CD4-positive, alpha-beta memory T cell (primary cell): ENCODE measurements at regions of chr3 and their contacts with region 1.

Region 1: DNA sequence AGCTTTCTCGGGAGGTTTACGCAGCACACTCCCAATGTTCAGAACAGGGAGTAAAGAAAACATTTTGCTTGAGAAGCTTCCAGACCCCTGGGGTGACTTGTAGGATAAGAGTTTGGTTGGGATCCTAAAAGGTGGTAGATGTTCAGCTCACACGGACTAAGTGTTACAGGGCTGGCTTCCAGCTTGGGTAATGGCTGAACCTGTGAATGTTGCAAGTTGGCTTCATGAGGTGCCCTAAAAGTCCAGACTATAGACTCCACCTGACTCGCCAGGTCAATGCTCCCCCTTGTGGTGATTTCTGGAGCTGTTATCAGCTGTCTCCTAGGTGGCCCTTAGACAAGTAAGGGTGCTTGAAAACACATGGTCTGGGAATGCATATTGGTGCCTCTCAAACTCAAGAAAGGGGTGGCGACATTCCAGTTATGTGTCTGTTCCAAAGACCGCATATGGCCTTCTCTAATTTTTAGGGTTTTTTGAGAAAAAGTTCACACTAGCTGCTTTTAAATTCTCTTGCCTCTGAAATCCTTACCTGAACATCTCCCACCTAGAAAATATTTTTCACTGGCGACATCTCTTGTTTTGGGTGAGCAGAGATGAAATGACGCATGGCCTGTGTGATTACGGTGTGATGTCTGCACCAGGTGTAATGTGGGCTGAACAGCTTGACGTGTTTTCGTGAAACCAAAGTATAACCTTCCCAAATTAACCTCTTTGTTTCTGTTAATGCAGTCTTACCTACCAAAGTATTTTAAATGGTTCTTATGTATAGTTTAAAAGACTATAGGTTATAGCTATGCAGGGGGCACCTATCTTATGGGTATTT is 175.7 kb upstream of the KBTBD8 start:
- DNase-seq: peak; percentile 60 to 73 (median 64)
- H3K4me3 ChIP-seq: no peak overlapping the region
- H3K4me3 Mint-ChIP-seq: no peak overlapping the region
- H3K27ac ChIP-seq: no peak overlapping the region
- H3K27ac Mint-ChIP-seq: no peak overlapping the region
- H3K4me1 ChIP-seq: no peaks in the 10 kb centered on the region
- H3K4me1 Mint-ChIP-seq: peaks cover 0 to 2% (median 0%) of the 10 kb centered on the region in 4 donors
- H3K27me3 ChIP-seq: no peaks in the 10 kb centered on the region
- H3K27me3 Mint-ChIP-seq: peaks cover 0 to 4% of the 10 kb centered on the region in 2 donors

Region 2: GRCh38 chr3:66248641-66249040 is 573.8 kb before region 1 on chr3:
- CTCF ChIA-PET with region 1: interaction called, 183 read pairs
- POLR2A ChIA-PET with region 1: interaction called, 5 read pairs
- intact Hi-C with region 1: no loop called
- DNase-seq: no peak
- H3K4me3 ChIP-seq: no peak overlapping the region
- H3K4me3 Mint-ChIP-seq: no peak overlapping the region
- H3K27ac ChIP-seq: no peak overlapping the region
- H3K27ac Mint-ChIP-seq: no peak overlapping the region
- H3K4me1 ChIP-seq: no peaks in the 10 kb centered on the region
- H3K4me1 Mint-ChIP-seq: peaks cover 0 to 3% (median under 1%) of the 10 kb centered on the region in 4 donors
- H3K27me3 ChIP-seq: no peaks in the 10 kb centered on the region
- H3K27me3 Mint-ChIP-seq: no peaks in the 10 kb centered on the region

Region 3: GRCh38 chr3:66276705-66277274 is 545.6 kb before region 1 on chr3:
- CTCF ChIA-PET with region 1: interaction called, 42 read pairs
- POLR2A ChIA-PET with region 1: no interaction called
- intact Hi-C with region 1: loop called (anchors 1 kb)
- DNase-seq: peak; percentile 71 to 75 (median 73)
- H3K4me3 ChIP-seq: no peak overlapping the region
- H3K4me3 Mint-ChIP-seq: no peak overlapping the region
- H3K27ac ChIP-seq: no peak overlapping the region
- H3K27ac Mint-ChIP-seq: peak overlapping the region; percentile 6 to 86 (median 71)
- H3K4me1 ChIP-seq: peaks cover 34% of the 10 kb centered on the region
- H3K4me1 Mint-ChIP-seq: peaks cover 25 to 45% (median 34%) of the 10 kb centered on the region in 4 donors
- H3K27me3 ChIP-seq: no peaks in the 10 kb centered on the region
- H3K27me3 Mint-ChIP-seq: no peaks in the 10 kb centered on the region

Region 4: DNA sequence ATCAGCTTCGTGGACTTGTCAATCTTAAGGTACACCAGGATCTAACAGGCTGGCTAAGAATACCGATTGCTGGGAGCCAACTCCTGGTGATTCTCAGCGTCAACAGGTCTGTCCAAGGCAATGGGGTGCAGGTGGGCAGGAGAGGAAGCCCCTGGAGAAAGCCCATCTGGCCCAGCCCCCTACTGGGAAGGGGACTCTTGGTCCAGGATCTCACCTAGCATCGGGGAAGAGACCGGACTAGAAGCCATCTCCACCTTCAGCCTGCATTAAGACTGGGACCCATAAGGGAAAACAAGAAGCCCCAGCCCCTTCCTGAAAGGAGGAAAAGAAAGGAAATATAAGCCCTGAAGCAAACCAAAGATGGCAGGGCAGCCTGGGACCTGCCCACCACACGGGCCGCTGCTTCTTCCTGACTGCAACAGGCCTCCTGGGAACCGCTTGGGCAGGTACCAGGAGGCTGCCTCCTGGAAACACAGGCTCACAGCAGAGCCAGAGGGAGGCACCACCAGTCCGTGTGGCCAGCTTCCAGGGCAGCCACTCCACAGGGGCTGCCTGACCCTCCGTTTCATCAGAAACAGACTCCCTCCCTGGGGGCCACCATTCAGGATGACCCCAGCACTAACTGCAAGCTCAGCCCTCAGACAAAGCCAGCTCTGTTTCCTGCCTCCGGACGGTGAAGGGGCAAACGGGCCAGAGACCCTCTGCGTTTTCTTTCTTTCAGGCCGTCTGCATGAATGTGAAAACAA is 421.8 kb before region 1 on chr3:
- CTCF ChIA-PET with region 1: interaction called, 187 read pairs
- POLR2A ChIA-PET with region 1: no interaction called
- intact Hi-C with region 1: no loop called
- DNase-seq: no peak
- H3K4me3 ChIP-seq: no peak overlapping the region
- H3K4me3 Mint-ChIP-seq: no peak overlapping the region
- H3K27ac ChIP-seq: no peak overlapping the region
- H3K27ac Mint-ChIP-seq: peak overlapping the region in 6 of 7 donors; percentile 12 to 84 (median 32)
- H3K4me1 ChIP-seq: no peaks in the 10 kb centered on the region
- H3K4me1 Mint-ChIP-seq: peaks cover 0 to 2% (median 0%) of the 10 kb centered on the region in 4 donors
- H3K27me3 ChIP-seq: no peaks in the 10 kb centered on the region
- H3K27me3 Mint-ChIP-seq: no peaks in the 10 kb centered on the region

Region 5: GRCh38 chr3:66803206-66803605 is 19.2 kb before region 1 on chr3:
- CTCF ChIA-PET with region 1: interaction called, 28 read pairs
- POLR2A ChIA-PET with region 1: no interaction called
- intact Hi-C with region 1: no loop called
- DNase-seq: no peak
- H3K4me3 ChIP-seq: no peak overlapping the region
- H3K4me3 Mint-ChIP-seq: peak overlapping the region in 1 of 8 donors; percentile 18
- H3K27ac ChIP-seq: no peak overlapping the region
- H3K27ac Mint-ChIP-seq: peak overlapping the region in 1 of 7 donors; percentile 11
- H3K4me1 ChIP-seq: no peaks in the 10 kb centered on the region
- H3K4me1 Mint-ChIP-seq: peaks cover 2 to 11% (median 7%) of the 10 kb centered on the region in 4 donors
- H3K27me3 ChIP-seq: no peaks in the 10 kb centered on the region
- H3K27me3 Mint-ChIP-seq: peaks cover 12 to 14% of the 10 kb centered on the region in 2 donors

Region 6: DNA sequence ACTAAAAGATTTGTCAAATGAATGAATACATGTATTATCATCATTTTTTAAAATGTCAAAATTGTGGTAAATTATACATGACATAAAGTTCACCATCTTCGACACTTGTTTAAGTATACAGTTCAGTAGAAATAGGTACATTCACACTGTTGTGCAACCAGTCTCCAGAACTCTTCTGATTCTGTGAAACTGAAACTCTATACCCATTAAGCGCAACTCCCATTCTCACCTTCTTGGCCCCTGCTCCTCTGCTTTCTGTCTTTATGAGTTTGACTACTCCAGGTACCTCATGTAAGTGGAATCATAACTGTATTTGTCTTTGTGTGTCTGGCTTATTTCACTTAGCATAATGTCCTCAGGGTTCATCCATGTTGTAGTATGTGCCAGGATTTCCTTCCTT is 125.6 kb after region 1 on chr3:
- CTCF ChIA-PET with region 1: no interaction called
- POLR2A ChIA-PET with region 1: no interaction called
- intact Hi-C with region 1: no loop called
- DNase-seq: no peak
- H3K4me3 ChIP-seq: no peak overlapping the region
- H3K4me3 Mint-ChIP-seq: no peak overlapping the region
- H3K27ac ChIP-seq: no peak overlapping the region
- H3K27ac Mint-ChIP-seq: no peak overlapping the region
- H3K4me1 ChIP-seq: no peaks in the 10 kb centered on the region
- H3K4me1 Mint-ChIP-seq: no peaks in the 10 kb centered on the region
- H3K27me3 ChIP-seq: no peaks in the 10 kb centered on the region
- H3K27me3 Mint-ChIP-seq: peaks cover 0 to 7% of the 10 kb centered on the region in 2 donors